Prostate gland (tissue), 2 donors: ENCODE measurements at regions of chr3 and their contacts with region 1.

Region 1: GRCh38 chr3:168847291-168847883 is 751.7 kb upstream of the GOLIM4 start:
- DNase-seq: no peak
- H3K4me3 ChIP-seq: no peak overlapping the region
- H3K27ac ChIP-seq: no peak overlapping the region
- H3K4me1 ChIP-seq: no peaks in the 10 kb centered on the region
- H3K27me3 ChIP-seq: no peaks in the 10 kb centered on the region
- CTCF ChIP-seq: peak; percentile 12 to 57 (median 50)
- POLR2A ChIP-seq: no peak

Region 2: DNA sequence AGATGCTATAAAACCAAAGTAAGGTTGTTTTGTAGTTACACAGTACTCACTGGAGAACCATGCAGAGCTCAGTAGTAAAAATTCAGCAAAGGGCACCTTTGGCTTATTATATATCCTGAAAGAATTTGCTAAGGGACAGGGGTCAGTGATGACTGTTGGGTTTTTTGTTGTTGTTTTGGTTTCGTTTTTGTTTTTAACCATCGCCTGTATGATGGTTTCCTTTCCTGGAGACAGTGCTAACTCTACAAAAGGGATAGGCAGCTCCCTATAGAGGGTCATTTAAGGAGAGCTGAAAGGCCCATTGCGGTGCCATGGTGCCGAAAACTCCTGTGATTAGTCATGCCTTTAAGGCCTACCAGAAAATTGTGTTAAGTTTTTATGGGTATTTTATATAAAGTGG is 633.5 kb before region 1 on chr3:
- intact Hi-C with region 1: loop called (anchors 2 kb)
- DNase-seq: no peak
- H3K4me3 ChIP-seq: no peak overlapping the region
- H3K27ac ChIP-seq: no peak overlapping the region
- H3K4me1 ChIP-seq: no peaks in the 10 kb centered on the region
- H3K27me3 ChIP-seq: no peaks in the 10 kb centered on the region
- CTCF ChIP-seq: no peak
- POLR2A ChIP-seq: no peak

Region 3: DNA sequence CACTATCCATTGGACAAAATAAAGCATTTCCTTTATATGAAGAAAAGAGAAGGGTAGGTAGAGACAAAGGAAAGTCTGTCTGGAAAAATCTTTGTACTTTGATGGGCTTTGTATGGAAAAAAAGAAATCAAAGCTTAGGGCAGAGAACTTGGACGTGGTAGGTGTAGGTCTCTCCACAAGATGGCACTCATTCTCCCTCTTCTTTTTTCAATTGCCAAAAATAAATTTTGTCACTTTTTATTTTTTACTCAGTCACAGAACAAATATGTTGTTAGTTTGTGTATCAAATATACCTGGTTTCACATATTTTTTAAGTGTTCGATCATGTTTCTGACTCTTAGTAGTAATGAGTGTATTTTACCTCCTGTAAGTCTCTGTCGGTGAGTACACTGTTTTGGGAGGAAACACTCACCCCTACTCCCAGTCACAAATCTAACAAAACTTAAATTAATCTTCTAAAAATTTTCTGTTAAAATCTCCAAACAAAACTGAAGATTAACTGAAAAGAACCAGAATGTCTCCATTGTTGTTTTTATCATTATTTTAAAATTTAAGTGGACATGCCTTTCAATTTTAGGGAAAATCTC is 335.9 kb before region 1 on chr3:
- intact Hi-C with region 1: loop called (anchors 5 kb)
- DNase-seq: no peak
- H3K4me3 ChIP-seq: no peak overlapping the region
- H3K27ac ChIP-seq: no peak overlapping the region
- H3K4me1 ChIP-seq: no peaks in the 10 kb centered on the region
- H3K27me3 ChIP-seq: no peaks in the 10 kb centered on the region
- CTCF ChIP-seq: peak in 1 of 4 experiments; percentile 25
- POLR2A ChIP-seq: no peak